Right cardiac atrium (tissue), 5 donors: ENCODE measurements at regions of chr11 and their contacts with region 1.

Region 1: GRCh38 chr11:77547863-77548551 is 41.7 kb upstream of the AQP11 start:
- DNase-seq: no peak
- ATAC-seq: peak; percentile 29 to 43
- H3K4me3 ChIP-seq: no peak overlapping the region
- H3K27ac ChIP-seq: no peak overlapping the region
- H3K4me1 ChIP-seq: no peaks in the 10 kb centered on the region
- H3K27me3 ChIP-seq: no peaks in the 10 kb centered on the region

Region 2: DNA sequence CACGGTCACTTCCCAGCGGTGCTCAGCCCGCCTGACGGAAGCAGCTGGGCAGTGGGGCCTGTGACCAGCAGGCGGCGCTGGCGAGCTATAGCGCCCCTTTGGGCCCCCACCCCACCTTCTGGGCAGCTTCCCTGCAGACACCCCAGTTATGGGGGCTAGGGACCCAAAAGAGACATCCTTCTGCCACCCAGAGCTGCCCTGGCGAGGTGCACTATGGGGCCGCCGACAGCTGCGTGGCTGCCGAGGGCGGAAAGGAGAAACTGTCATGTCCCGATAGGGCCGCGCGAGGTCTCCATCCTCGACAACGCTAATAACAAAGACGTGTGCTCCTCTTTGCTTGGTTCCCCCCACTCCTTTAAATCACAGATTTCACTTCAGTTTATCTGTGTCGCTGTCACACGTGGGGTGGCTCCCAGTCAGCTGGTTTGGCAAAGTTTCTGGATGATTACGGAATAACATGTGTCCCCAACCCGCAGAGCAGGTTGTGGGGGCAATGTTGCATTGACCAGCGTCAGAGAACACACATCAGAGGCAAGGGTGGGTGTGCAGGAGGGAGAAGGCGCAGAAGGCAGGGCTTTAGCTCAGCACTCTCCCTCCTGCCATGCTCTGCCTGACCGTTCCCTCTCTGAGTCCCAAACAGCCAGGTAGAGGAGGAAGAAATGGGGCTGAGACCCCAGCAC is 420.6 kb before region 1 on chr11:
- intact Hi-C with region 1: loop called in 2 of 4 experiments (anchors 5 to 10 kb)
- DNase-seq: peak; percentile 59 to 86 (median 83)
- ATAC-seq: peak; percentile 70 to 77
- H3K4me3 ChIP-seq: peak overlapping the region; percentile 38
- H3K27ac ChIP-seq: no peak overlapping the region
- H3K4me1 ChIP-seq: peaks cover 7% of the 10 kb centered on the region
- H3K27me3 ChIP-seq: no peaks in the 10 kb centered on the region

Region 3: GRCh38 chr11:77140231-77140851 is 407.7 kb before region 1 on chr11:
- intact Hi-C with region 1: loop called in 1 of 4 experiments (anchors 5 kb)
- DNase-seq: peak; percentile 49 to 83 (median 71)
- ATAC-seq: peak; percentile 76 to 80
- H3K4me3 ChIP-seq: no peak overlapping the region
- H3K27ac ChIP-seq: peak overlapping the region; percentile 50
- H3K4me1 ChIP-seq: no peaks in the 10 kb centered on the region
- H3K27me3 ChIP-seq: no peaks in the 10 kb centered on the region

Region 4: DNA sequence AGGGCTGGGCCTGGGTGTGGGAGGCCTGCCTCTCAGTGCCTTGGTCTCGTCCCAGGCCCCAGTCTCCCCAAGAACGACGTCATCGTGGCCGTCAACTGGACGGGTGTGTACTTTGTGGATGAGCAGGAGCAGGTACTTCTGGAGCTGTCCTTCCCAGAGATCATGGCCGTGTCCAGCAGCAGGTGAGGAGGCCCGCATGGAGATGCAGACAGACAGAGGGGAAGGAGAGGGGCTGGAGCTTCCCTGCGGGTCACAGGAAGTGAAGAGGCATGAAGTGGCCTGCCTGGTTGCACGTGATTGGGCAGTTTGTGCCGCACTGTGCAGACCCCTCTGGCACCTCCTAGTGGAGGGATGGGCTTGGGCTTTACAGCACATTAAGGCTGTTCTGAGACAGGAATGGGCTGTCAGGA is 349.6 kb before region 1 on chr11:
- intact Hi-C with region 1: loop called (anchors 5 to 10 kb)
- DNase-seq: no peak
- ATAC-seq: no peak
- H3K4me3 ChIP-seq: no peak overlapping the region
- H3K27ac ChIP-seq: no peak overlapping the region
- H3K4me1 ChIP-seq: no peaks in the 10 kb centered on the region
- H3K27me3 ChIP-seq: no peaks in the 10 kb centered on the region

Region 5: DNA sequence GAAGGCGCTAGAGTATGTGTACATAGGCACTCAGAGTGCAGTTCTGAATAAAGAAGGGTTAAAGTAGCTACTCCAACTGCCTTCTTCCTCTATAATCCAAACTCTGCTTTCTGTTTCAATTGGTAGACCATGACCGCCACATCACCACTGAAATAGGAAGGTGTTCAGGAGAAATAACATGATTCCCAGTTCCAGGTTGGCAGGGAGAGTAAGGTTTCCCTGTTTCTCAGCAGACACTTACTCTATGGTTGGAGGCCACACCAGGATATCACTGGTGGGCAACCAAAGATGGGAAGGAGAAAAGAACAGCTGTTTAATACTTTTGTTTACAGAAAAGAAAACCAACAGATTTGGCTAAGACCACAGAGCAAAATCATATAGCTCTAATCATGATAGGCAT is 112.0 kb before region 1 on chr11:
- intact Hi-C with region 1: no loop called
- DNase-seq: no peak
- ATAC-seq: no peak
- H3K4me3 ChIP-seq: no peak overlapping the region
- H3K27ac ChIP-seq: no peak overlapping the region
- H3K4me1 ChIP-seq: peaks cover 2% of the 10 kb centered on the region
- H3K27me3 ChIP-seq: no peaks in the 10 kb centered on the region